Right cardiac atrium (tissue), 5 donors: ENCODE measurements at regions of chr12 and their contacts with region 1.

Region 1: GRCh38 chr12:1650260-1650977 is 21.4 kb downstream of the WNT5B start:
- DNase-seq: peak in 1 of 3 donors; percentile 73
- ATAC-seq: peak; percentile 50 to 88
- H3K4me3 ChIP-seq: no peak overlapping the region
- H3K27ac ChIP-seq: peak overlapping the region; percentile 28
- H3K4me1 ChIP-seq: peaks cover 4% of the 10 kb centered on the region
- H3K27me3 ChIP-seq: no peaks in the 10 kb centered on the region

Region 2: GRCh38 chr12:1795785-1796514 is 145.5 kb after region 1 on chr12:
- intact Hi-C with region 1: loop called (anchors 2 kb)
- DNase-seq: peak; percentile 95 to 98 (median 98)
- ATAC-seq: peak; percentile 95 to 96
- H3K4me3 ChIP-seq: peak overlapping the region; percentile 33
- H3K27ac ChIP-seq: peak overlapping the region; percentile 3
- H3K4me1 ChIP-seq: no peaks in the 10 kb centered on the region
- H3K27me3 ChIP-seq: no peaks in the 10 kb centered on the region